Spleen (tissue), 13 donors: ENCODE measurements at regions of chr11 and their contacts with region 1.

Region 1: GRCh38 chr11:72569966-72570892 is 104.0 kb downstream of the PDE2A start:
- DNase-seq: no peak
- H3K4me3 ChIP-seq: no peak overlapping the region
- H3K27ac ChIP-seq: peak overlapping the region in 2 of 8 donors; percentile 12 to 31
- H3K4me1 ChIP-seq: peaks cover 0 to 19% (median 3%) of the 10 kb centered on the region in 6 donors
- H3K27me3 ChIP-seq: peaks cover 0 to 16% (median 0%) of the 10 kb centered on the region in 7 donors
- CTCF ChIP-seq: no peak
- POLR2A ChIP-seq: no peak

Region 2: GRCh38 chr11:72058416-72059034 is 511.7 kb before region 1 on chr11:
- intact Hi-C with region 1: no loop called
- DNase-seq: no peak
- H3K4me3 ChIP-seq: no peak overlapping the region
- H3K27ac ChIP-seq: no peak overlapping the region
- H3K4me1 ChIP-seq: peaks cover 0 to 13% (median 8%) of the 10 kb centered on the region in 6 donors
- H3K27me3 ChIP-seq: no peaks in the 10 kb centered on the region
- CTCF ChIP-seq: no peak
- POLR2A ChIP-seq: no peak

Region 3: GRCh38 chr11:72483412-72484186 is 86.6 kb before region 1 on chr11:
- intact Hi-C with region 1: loop called (anchors 10 kb)
- DNase-seq: no peak
- H3K4me3 ChIP-seq: peak overlapping the region in 1 of 8 donors; percentile 5
- H3K27ac ChIP-seq: peak overlapping the region; percentile 15 to 83 (median 66)
- H3K4me1 ChIP-seq: peaks cover 9 to 26% (median 18%) of the 10 kb centered on the region in 6 donors
- H3K27me3 ChIP-seq: no peaks in the 10 kb centered on the region
- CTCF ChIP-seq: no peak
- POLR2A ChIP-seq: no peak